ENCODE measurements at regions of chr7 and their contacts with region 1.

Region 1: DNA sequence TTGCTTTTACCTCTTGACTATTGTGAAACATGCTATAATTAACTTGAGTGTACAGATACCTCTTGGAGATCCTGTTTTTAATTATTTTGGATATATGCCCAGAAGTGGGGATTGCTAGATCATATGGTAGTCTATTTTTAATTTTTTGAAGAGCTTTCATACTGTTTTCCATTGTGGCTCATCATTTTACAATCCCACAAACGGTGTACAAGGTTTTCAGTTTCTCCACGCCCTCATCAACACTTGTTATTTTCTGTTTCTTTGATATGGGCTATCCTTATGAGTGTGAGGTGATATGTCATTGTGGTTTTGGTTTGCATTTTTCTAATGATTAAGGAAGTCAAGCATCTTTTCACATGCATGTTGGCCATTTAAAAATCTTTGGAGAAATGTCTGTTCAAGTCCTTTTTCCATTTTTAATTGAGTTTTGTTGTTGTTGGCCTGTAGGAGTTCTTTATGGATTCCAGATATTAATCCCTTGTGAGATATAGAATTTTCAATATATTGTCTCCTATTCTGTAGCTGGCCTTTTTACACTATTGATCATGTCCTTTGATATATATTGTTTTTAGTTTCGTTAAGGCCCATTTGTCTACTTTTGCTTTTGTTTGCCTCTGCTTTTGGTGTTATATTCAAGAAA is 7.5 kb downstream of the AGK start:
- DNase-seq: peak in 1 of 2 donors; percentile 74
- ATAC-seq: peak; percentile 67 to 78 (median 74)
- H3K4me3 ChIP-seq: no peak overlapping the region
- H3K4me3 Mint-ChIP-seq: peak overlapping the region; percentile 88
- H3K27ac ChIP-seq: peak overlapping the region; percentile 86
- H3K27ac Mint-ChIP-seq: peak overlapping the region; percentile 89 to 97
- H3K4me1 ChIP-seq: peaks cover 30% of the 10 kb centered on the region
- H3K4me1 Mint-ChIP-seq: peaks cover 68 to 74% of the 10 kb centered on the region in 2 donors
- H3K27me3 ChIP-seq: no peaks in the 10 kb centered on the region
- H3K27me3 Mint-ChIP-seq: no peaks in the 10 kb centered on the region
- CTCF ChIP-seq: no peak

Region 2: DNA sequence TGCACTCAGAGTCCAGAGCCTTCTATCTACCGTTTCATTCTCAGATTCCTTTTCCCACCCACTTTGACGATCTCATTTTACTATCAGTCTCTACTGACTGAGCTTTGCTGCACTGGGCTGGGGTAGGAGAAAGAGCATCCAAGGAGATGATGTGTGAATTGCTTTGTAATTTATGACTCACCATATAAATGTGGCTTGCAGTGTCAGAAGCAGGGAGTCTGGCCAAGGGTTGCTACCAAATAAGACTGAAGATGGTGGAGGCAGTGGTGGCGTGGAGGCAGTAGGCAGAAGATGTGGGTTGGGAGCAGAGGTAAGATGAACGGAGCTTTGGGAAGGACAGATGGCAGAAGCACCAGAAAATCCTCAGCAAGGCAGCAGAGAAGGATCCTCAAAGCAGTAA is 80.8 kb before region 1 on chr7:
- intact Hi-C with region 1: no loop called
- DNase-seq: no peak
- ATAC-seq: no peak
- H3K4me3 ChIP-seq: no peak overlapping the region
- H3K4me3 Mint-ChIP-seq: no peak overlapping the region
- H3K27ac ChIP-seq: no peak overlapping the region
- H3K27ac Mint-ChIP-seq: no peak overlapping the region
- H3K4me1 ChIP-seq: no peaks in the 10 kb centered on the region
- H3K4me1 Mint-ChIP-seq: no peaks in the 10 kb centered on the region
- H3K27me3 ChIP-seq: no peaks in the 10 kb centered on the region
- H3K27me3 Mint-ChIP-seq: peaks cover 12 to 29% of the 10 kb centered on the region in 2 donors
- CTCF ChIP-seq: no peak

Region 3: DNA sequence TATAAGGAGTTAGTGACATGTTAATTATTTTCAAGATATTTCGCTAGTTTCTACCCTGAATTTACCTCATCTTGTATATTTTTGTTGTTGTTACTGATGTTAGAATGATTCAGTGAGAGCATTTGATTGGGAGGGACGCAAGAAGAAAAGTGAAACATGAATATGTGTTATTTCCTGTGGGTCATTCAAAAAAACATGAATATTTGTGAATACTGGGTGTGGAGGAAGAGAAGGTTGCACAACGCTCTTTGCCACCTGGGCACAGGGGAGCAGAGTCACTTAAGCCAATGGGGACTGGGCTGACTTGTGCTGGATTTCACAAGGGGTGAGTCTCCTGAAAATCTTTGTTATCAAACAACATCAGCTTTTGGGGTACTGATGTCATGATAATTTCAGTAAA is 32.0 kb after region 1 on chr7:
- intact Hi-C with region 1: loop called (anchors 1 kb)
- DNase-seq: peak; percentile 34 to 46
- ATAC-seq: peak; percentile 75 to 89 (median 76)
- H3K4me3 ChIP-seq: no peak overlapping the region
- H3K4me3 Mint-ChIP-seq: peak overlapping the region; percentile 77
- H3K27ac ChIP-seq: peak overlapping the region; percentile 75
- H3K27ac Mint-ChIP-seq: peak overlapping the region; percentile 87 to 90
- H3K4me1 ChIP-seq: peaks cover 56% of the 10 kb centered on the region
- H3K4me1 Mint-ChIP-seq: peaks cover 69 to 73% of the 10 kb centered on the region in 2 donors
- H3K27me3 ChIP-seq: no peaks in the 10 kb centered on the region
- H3K27me3 Mint-ChIP-seq: no peaks in the 10 kb centered on the region
- CTCF ChIP-seq: no peak

Region 4: GRCh38 chr7:141610671-141611070 is 52.0 kb after region 1 on chr7:
- intact Hi-C with region 1: no loop called
- DNase-seq: no peak
- ATAC-seq: no peak
- H3K4me3 ChIP-seq: no peak overlapping the region
- H3K4me3 Mint-ChIP-seq: no peak overlapping the region
- H3K27ac ChIP-seq: no peak overlapping the region
- H3K27ac Mint-ChIP-seq: no peak overlapping the region
- H3K4me1 ChIP-seq: no peaks in the 10 kb centered on the region
- H3K4me1 Mint-ChIP-seq: peaks cover 0 to 7% of the 10 kb centered on the region in 2 donors
- H3K27me3 ChIP-seq: no peaks in the 10 kb centered on the region
- H3K27me3 Mint-ChIP-seq: no peaks in the 10 kb centered on the region
- CTCF ChIP-seq: no peak

Region 5: GRCh38 chr7:141844256-141844655 is 285.6 kb after region 1 on chr7:
- intact Hi-C with region 1: no loop called
- DNase-seq: no peak
- ATAC-seq: no peak
- H3K4me3 ChIP-seq: no peak overlapping the region
- H3K4me3 Mint-ChIP-seq: no peak overlapping the region
- H3K27ac ChIP-seq: no peak overlapping the region
- H3K27ac Mint-ChIP-seq: no peak overlapping the region
- H3K4me1 ChIP-seq: no peaks in the 10 kb centered on the region
- H3K4me1 Mint-ChIP-seq: no peaks in the 10 kb centered on the region
- H3K27me3 ChIP-seq: no peaks in the 10 kb centered on the region
- H3K27me3 Mint-ChIP-seq: peaks cover 0 to 7% of the 10 kb centered on the region in 2 donors
- CTCF ChIP-seq: no peak

Measured in natural killer cell (primary cell).